Breast epithelium (tissue), 4 donors: ENCODE measurements at regions of chr1 and their contacts with region 1.

Region 1: GRCh38 chr1:211827051-211827450 is 3.5 kb downstream of the LPGAT1 start:
- DNase-seq: no peak
- H3K4me3 ChIP-seq: no peak overlapping the region
- H3K27ac ChIP-seq: no peak overlapping the region
- H3K4me1 ChIP-seq: peaks cover 0 to 5% of the 10 kb centered on the region in 2 donors
- H3K27me3 ChIP-seq: no peaks in the 10 kb centered on the region
- CTCF ChIP-seq: no peak
- POLR2A ChIP-seq: no peak

Region 2: DNA sequence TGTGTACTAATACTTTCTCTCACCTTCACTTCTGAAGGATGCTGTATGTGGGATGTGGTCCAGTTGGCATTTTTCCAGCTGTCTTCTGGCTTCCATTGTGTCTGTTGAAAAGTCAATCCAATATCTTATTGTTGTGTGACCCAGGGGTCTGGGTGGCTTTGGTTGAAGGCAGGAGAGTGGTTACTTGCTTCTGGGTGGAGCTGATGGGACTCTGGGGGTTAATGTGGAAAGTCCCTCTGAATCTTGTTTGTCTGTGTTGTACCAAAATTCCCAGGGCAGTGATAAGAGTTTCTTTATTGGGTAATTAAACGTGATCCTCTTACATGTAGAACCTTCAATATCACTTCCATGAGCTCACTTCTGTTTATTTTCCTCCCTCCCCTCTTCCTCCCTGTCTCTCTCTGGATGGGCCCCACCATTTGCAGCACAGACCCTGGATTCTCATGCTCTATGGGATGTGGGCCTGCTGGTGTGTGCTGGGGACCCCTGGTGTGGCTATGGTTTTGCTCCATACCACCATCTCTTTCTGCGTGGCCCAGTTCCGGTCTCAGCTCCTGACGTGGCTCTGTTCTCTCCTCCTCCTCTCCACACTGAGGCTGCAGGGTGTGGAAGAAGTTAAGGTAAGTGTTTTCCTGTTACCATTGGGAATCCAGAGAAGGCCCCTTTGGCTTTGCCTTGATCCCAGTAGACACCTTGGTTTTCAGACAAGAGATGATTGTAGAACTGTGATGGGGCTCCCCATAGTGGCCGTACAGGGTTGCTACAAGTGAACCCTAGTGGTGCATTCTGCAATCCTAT is 1426.8 kb before region 1 on chr1:
- intact Hi-C with region 1: no loop called
- DNase-seq: peak; percentile 52 to 56
- H3K4me3 ChIP-seq: no peak overlapping the region
- H3K27ac ChIP-seq: no peak overlapping the region
- H3K4me1 ChIP-seq: peaks cover 0 to 4% of the 10 kb centered on the region in 2 donors
- H3K27me3 ChIP-seq: no peaks in the 10 kb centered on the region
- CTCF ChIP-seq: peak; percentile 28 to 94 (median 80)
- POLR2A ChIP-seq: no peak

Region 3: DNA sequence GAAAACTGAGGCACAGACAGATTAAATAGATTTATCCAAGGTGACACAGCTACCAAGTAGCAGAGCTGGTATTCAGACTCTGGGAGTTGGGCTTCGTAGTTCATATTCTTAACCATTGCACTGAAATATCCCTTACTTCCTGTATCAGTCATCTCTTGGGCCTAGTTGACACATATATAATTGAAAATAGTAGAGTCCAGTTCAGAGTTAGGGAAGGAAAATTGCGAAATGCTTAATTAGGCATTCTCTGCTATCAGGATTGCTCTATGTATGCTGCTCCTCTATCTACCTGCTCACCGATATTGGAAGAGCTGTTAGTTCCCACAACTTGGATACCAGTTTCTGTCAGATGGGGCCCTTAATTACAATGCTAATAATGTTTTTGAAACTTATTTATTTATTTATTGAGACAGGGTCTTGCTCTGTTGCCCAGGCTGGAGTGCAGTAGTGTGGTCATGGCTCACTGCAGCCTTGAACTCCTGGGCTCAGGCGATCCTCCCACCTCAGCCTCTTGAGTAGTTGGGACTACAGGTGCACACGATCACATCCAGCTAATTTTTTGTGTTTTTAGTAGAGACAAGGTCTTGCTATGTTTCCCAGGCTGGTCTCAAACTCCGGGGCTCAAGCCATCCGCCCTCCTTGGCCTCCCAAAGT is 559.7 kb before region 1 on chr1:
- intact Hi-C with region 1: no loop called
- DNase-seq: no peak
- H3K4me3 ChIP-seq: no peak overlapping the region
- H3K27ac ChIP-seq: no peak overlapping the region
- H3K4me1 ChIP-seq: no peaks in the 10 kb centered on the region
- H3K27me3 ChIP-seq: no peaks in the 10 kb centered on the region
- CTCF ChIP-seq: no peak
- POLR2A ChIP-seq: no peak

Region 4: GRCh38 chr1:211813590-211813989 is 13.5 kb before region 1 on chr1:
- intact Hi-C with region 1: loop called (anchors 1 kb)
- DNase-seq: no peak
- H3K4me3 ChIP-seq: no peak overlapping the region
- H3K27ac ChIP-seq: no peak overlapping the region
- H3K4me1 ChIP-seq: no peaks in the 10 kb centered on the region
- H3K27me3 ChIP-seq: no peaks in the 10 kb centered on the region
- CTCF ChIP-seq: no peak
- POLR2A ChIP-seq: no peak

Region 5: GRCh38 chr1:211843018-211843417 is 16.0 kb after region 1 on chr1:
- intact Hi-C with region 1: no loop called
- DNase-seq: no peak
- H3K4me3 ChIP-seq: peak overlapping the region in 1 of 3 donors; percentile 35
- H3K27ac ChIP-seq: peak overlapping the region in 1 of 2 donors; percentile 30
- H3K4me1 ChIP-seq: no peaks in the 10 kb centered on the region
- H3K27me3 ChIP-seq: no peaks in the 10 kb centered on the region
- CTCF ChIP-seq: no peak
- POLR2A ChIP-seq: no peak

Region 6: DNA sequence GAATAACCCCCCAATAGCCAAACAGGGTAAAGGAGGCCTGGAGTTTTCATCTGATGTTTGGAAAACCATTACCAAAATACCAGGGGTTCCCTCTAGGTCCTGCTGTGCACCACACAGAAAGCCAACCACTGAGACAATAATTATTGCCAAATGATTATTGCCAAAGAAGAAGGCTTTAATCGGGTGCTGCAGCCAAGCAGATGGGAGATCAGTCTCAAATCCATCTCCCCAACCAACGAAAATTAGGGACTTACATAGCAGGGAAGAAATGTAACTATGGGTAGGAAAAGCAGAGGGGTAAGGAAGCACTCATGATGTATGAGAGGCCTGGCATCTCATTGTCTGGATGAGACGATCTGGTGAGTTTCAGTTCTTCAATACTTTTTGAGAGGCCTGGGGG is 32.4 kb after region 1 on chr1:
- intact Hi-C with region 1: no loop called
- DNase-seq: no peak
- H3K4me3 ChIP-seq: no peak overlapping the region
- H3K27ac ChIP-seq: no peak overlapping the region
- H3K4me1 ChIP-seq: no peaks in the 10 kb centered on the region
- H3K27me3 ChIP-seq: no peaks in the 10 kb centered on the region
- CTCF ChIP-seq: no peak
- POLR2A ChIP-seq: no peak